ENCODE measurements at regions of chr17 and their contacts with region 1.

Region 1: GRCh38 chr17:40086150-40087044 is 14.0 kb downstream of the NR1D1 start:
- H3K4me3 ChIP-seq: no peak overlapping the region
- H3K27ac ChIP-seq: no peak overlapping the region
- H3K4me1 ChIP-seq: no peaks in the 10 kb centered on the region
- CTCF ChIP-seq: peak; percentile 65; the same call in 1 of the 2 replicates

Region 2: GRCh38 chr17:40015005-40015997 is 71.1 kb before region 1 on chr17 and contains the start of gene CSF3:
- CTCF ChIA-PET with region 1: interaction called, 40 read pairs
- POLR2A ChIA-PET with region 1: no interaction called
- H3K4me3 ChIP-seq: no peak within 1 kb of the TSS
- H3K27ac ChIP-seq: no peak within 1 kb of the TSS
- H3K4me1 ChIP-seq: no peaks in the 10 kb centered on the region
- CTCF ChIP-seq: no peak

Region 3: GRCh38 chr17:40026816-40027613 is 59.4 kb before region 1 on chr17:
- CTCF ChIA-PET with region 1: interaction called, 154 read pairs
- POLR2A ChIA-PET with region 1: no interaction called
- H3K4me3 ChIP-seq: no peak overlapping the region
- H3K27ac ChIP-seq: no peak overlapping the region
- H3K4me1 ChIP-seq: peaks cover 16% of the 10 kb centered on the region
- CTCF ChIP-seq: peak; percentile 82

Region 4: GRCh38 chr17:40062329-40063186 is 23.8 kb before region 1 on chr17 and contains the start of gene THRA:
- CTCF ChIA-PET with region 1: interaction called, 20 read pairs
- POLR2A ChIA-PET with region 1: interaction called, 9 read pairs
- H3K4me3 ChIP-seq: peak within 1 kb of the TSS; percentile 84
- H3K27ac ChIP-seq: peak within 1 kb of the TSS; percentile 86; the same call in 1 of the 2 replicates
- H3K4me1 ChIP-seq: peaks cover 17% of the 10 kb centered on the region
- CTCF ChIP-seq: no peak

Region 5: GRCh38 chr17:40068917-40069750 is 17.3 kb before region 1 on chr17:
- CTCF ChIA-PET with region 1: interaction called, 26 read pairs
- POLR2A ChIA-PET with region 1: interaction called, 4 read pairs
- H3K4me3 ChIP-seq: no peak overlapping the region
- H3K27ac ChIP-seq: no peak overlapping the region; the same call in 1 of the 2 replicates
- H3K4me1 ChIP-seq: peaks cover 49% of the 10 kb centered on the region
- CTCF ChIP-seq: no peak

Region 6: DNA sequence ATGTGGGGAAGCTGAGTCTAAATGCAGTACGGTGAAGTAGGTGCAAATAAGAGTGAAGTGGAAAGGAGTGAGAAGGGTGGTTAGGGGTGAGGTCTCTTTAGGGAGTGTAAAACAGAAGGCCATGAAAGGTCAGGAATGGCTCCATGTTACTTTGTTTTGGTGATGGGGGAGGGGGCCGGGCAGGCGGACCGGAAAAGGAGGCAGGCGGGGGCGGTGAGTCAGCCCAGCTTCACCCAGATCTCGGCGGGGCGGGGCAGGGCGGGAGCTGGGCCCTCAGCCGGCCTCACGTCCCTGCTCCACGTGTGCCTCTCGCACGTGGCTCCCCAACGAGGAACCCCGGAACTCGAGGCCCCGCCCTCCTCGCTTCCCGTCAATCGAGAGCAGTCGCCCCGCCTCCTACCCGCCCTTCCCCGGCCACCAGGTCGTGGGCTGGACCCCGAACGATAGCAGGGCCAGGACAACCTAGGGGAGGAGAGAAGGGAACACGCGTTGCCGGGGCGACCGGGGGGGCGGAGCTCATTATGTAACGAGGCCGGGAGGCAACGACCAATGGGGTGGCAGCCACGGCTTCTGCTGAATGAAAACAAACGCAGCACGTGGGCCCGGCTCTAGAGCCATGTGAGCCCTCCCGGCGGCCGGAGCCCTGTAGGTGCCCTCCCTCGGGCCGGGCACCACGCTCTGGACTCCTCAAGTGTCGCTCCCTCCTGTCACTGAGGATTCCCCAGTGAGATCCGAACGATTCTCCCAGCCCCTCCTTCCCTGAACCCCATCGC is 12.6 kb after region 1 on chr17:
- CTCF ChIA-PET with region 1: interaction called, 25 read pairs
- POLR2A ChIA-PET with region 1: interaction called, 5 read pairs
- H3K4me3 ChIP-seq: peak overlapping the region; percentile 23
- H3K27ac ChIP-seq: peak overlapping the region; percentile 26; the same call in 1 of the 2 replicates
- H3K4me1 ChIP-seq: peaks cover 16% of the 10 kb centered on the region
- CTCF ChIP-seq: no peak